Endothelial cell of umbilical vein (primary cell): ENCODE measurements at regions of chr1 and their contacts with region 1.

Region 1: GRCh38 chr1:161098210-161099068 is at the start of gene KLHDC9:
- DNase-seq: peak; percentile 79
- H3K4me3 ChIP-seq: peak within 1 kb of the TSS; percentile 12 to 65 (median 45)
- H3K27ac ChIP-seq: no peak within 1 kb of the TSS
- H3K4me1 ChIP-seq: peaks cover 8% of the 10 kb centered on the region
- H3K27me3 ChIP-seq: no peaks in the 10 kb centered on the region
- CTCF ChIP-seq: peak in 1 of 2 donors; percentile 33
- POLR2A ChIP-seq: no peak
- total RNA-seq, gene KLHDC9: 1.1 and 1.4 TPM in 2 replicates

Region 2: DNA sequence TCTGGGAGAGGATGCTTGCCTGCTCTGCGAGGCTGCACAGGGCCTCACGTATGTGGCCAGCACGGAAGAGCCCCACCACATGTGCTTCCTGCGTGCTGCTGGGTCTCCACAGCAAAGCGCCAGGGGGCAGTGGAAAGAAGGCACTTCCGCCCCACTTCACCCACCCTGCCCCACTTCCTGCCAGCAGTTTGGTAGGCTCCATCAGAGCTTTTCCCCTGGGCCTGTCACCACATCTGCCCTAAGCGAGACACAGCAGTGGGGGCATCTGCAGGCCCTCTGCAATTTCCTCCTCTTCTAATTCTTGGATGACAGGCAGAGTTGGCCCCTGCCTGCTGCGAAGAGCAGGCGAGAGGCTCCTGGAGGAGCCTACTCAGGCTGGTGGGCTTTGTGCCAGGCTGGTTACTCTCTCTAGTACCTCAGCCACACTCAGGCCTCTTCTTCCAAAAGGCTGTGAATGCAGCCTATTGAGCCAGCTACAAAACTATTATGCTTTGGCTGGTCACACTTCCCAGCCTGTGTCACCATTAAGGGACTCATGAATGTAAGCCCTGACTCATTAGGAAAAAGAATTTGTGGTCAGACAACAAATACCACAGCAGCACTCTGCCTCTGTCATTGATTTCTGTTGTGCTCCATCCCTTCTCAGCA is 260.8 kb before region 1 on chr1:
- CTCF ChIA-PET with region 1: interaction called, 17 read pairs
- POLR2A ChIA-PET with region 1: no interaction called
- dilution Hi-C with region 1: no loop called
- intact Hi-C with region 1: loop called (anchors 2 kb)
- DNase-seq: no peak
- H3K4me3 ChIP-seq: no peak overlapping the region
- H3K27ac ChIP-seq: no peak overlapping the region
- H3K4me1 ChIP-seq: no peaks in the 10 kb centered on the region
- H3K27me3 ChIP-seq: no peaks in the 10 kb centered on the region
- CTCF ChIP-seq: no peak
- POLR2A ChIP-seq: no peak

Region 3: DNA sequence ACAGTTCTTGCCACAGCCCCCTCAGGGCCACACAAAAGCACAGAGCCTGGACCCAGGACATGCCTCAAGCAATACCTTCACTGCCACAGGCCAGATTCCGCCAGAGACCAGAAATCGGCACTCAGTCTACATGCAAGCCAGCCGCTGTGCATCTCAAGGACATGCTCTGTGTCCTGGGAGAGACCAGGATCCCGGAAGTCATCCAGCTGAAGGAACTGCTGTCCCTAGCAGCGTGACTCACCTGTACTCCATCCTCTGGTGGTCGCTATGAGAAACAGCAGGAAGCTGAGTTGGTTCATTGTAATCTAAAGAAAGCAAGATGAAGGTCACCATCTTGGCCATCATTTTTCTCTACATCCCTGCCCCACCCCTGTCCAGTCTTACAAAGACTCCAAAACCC is 213.9 kb before region 1 on chr1:
- CTCF ChIA-PET with region 1: no interaction called
- POLR2A ChIA-PET with region 1: no interaction called
- dilution Hi-C with region 1: no loop called
- intact Hi-C with region 1: no loop called
- DNase-seq: no peak
- H3K4me3 ChIP-seq: no peak overlapping the region
- H3K27ac ChIP-seq: no peak overlapping the region
- H3K4me1 ChIP-seq: peaks cover 4% of the 10 kb centered on the region
- H3K27me3 ChIP-seq: no peaks in the 10 kb centered on the region
- CTCF ChIP-seq: no peak
- POLR2A ChIP-seq: no peak

Region 4: GRCh38 chr1:161021165-161021960 is 77.1 kb before region 1 on chr1:
- CTCF ChIA-PET with region 1: interaction called, 17 read pairs
- POLR2A ChIA-PET with region 1: no interaction called
- dilution Hi-C with region 1: no loop called
- intact Hi-C with region 1: no loop called
- DNase-seq: peak; percentile 84
- H3K4me3 ChIP-seq: peak overlapping the region; percentile 70 to 87 (median 77)
- H3K27ac ChIP-seq: no peak overlapping the region
- H3K4me1 ChIP-seq: peaks cover 39% of the 10 kb centered on the region
- H3K27me3 ChIP-seq: no peaks in the 10 kb centered on the region
- CTCF ChIP-seq: no peak
- POLR2A ChIP-seq: no peak

Region 5: GRCh38 chr1:161117759-161118581 is 19.5 kb after region 1 on chr1 and contains the starts of genes NIT1 and PFDN2:
- CTCF ChIA-PET with region 1: interaction called, 9 read pairs
- POLR2A ChIA-PET with region 1: no interaction called
- dilution Hi-C with region 1: no loop called
- intact Hi-C with region 1: loop called (anchors 1 kb)
- DNase-seq: peak; percentile 86
- H3K4me3 ChIP-seq: peak within 1 kb of the TSS; percentile 21 to 100 (median 65)
- H3K27ac ChIP-seq: peak within 1 kb of the TSS; percentile 66
- H3K4me1 ChIP-seq: peaks cover 43% of the 10 kb centered on the region
- H3K27me3 ChIP-seq: no peaks in the 10 kb centered on the region
- CTCF ChIP-seq: no peak
- POLR2A ChIP-seq: peak; percentile 88
- total RNA-seq, gene NIT1: 20.3 and 20.9 TPM in 2 replicates
- total RNA-seq, gene PFDN2: 99.5 and 104 TPM in 2 replicates

Region 6: GRCh38 chr1:161139765-161140164 is 41.3 kb after region 1 on chr1:
- CTCF ChIA-PET with region 1: interaction called, 34 read pairs
- POLR2A ChIA-PET with region 1: no interaction called
- dilution Hi-C with region 1: no loop called
- intact Hi-C with region 1: loop called (anchors 1 kb)
- DNase-seq: peak; percentile 75
- H3K4me3 ChIP-seq: no peak overlapping the region
- H3K27ac ChIP-seq: no peak overlapping the region
- H3K4me1 ChIP-seq: no peaks in the 10 kb centered on the region
- H3K27me3 ChIP-seq: no peaks in the 10 kb centered on the region
- CTCF ChIP-seq: peak; percentile 18 to 47
- POLR2A ChIP-seq: no peak